T-cell (primary cell): ENCODE measurements at regions of chr19 and their contacts with region 1.

Region 1: GRCh38 chr19:16111160-16111908 is at the start of gene RAB8A:
- DNase-seq: peak; percentile 95 to 100 (median 98)
- ATAC-seq: peak; percentile 91 to 93 (median 91)
- H3K4me3 ChIP-seq: peak within 1 kb of the TSS; percentile 60 to 84
- H3K4me3 Mint-ChIP-seq: peak within 1 kb of the TSS; percentile 94 to 98 (median 97)
- H3K27ac ChIP-seq: peak within 1 kb of the TSS; percentile 82
- H3K27ac Mint-ChIP-seq: peak within 1 kb of the TSS; percentile 97 to 98
- H3K4me1 ChIP-seq: peaks cover 4 to 50% of the 10 kb centered on the region in 2 experiments
- H3K4me1 Mint-ChIP-seq: peaks cover 32 to 41% (median 40%) of the 10 kb centered on the region in 3 donors
- H3K27me3 ChIP-seq: no peaks in the 10 kb centered on the region
- H3K27me3 Mint-ChIP-seq: no peaks in the 10 kb centered on the region
- total RNA-seq, gene RAB8A: 67.0 to 84.5 (median 71.7) TPM

Region 2: GRCh38 chr19:16070366-16070990 is 40.9 kb before region 1 on chr19:
- CTCF ChIA-PET with region 1: interaction called, 3 to 10 read pairs
- POLR2A ChIA-PET with region 1: no interaction called
- DNase-seq: peak; percentile 70 to 93 (median 85)
- ATAC-seq: peak; percentile 90 to 93 (median 92)
- H3K4me3 ChIP-seq: peak overlapping the region; percentile 35 to 40
- H3K4me3 Mint-ChIP-seq: peak overlapping the region in 2 of 3 donors; percentile 54 to 69
- H3K27ac ChIP-seq: peak overlapping the region; percentile 96
- H3K27ac Mint-ChIP-seq: no peak overlapping the region
- H3K4me1 ChIP-seq: peaks cover 32 to 63% of the 10 kb centered on the region in 2 experiments
- H3K4me1 Mint-ChIP-seq: peaks cover 41 to 46% (median 44%) of the 10 kb centered on the region in 3 donors
- H3K27me3 ChIP-seq: no peaks in the 10 kb centered on the region
- H3K27me3 Mint-ChIP-seq: no peaks in the 10 kb centered on the region

Region 3: GRCh38 chr19:16078772-16079645 is 32.3 kb before region 1 on chr19:
- CTCF ChIA-PET with region 1: interaction called in 1 of 2 experiments, 3 read pairs
- POLR2A ChIA-PET with region 1: interaction called in 1 of 2 experiments, 14 read pairs
- DNase-seq: peak; percentile 27 to 91 (median 69)
- ATAC-seq: peak; percentile 77 to 81 (median 78)
- H3K4me3 ChIP-seq: peak overlapping the region; percentile 41 to 74
- H3K4me3 Mint-ChIP-seq: peak overlapping the region; percentile 75 to 95 (median 81)
- H3K27ac ChIP-seq: peak overlapping the region; percentile 78
- H3K27ac Mint-ChIP-seq: peak overlapping the region; percentile 95 to 99
- H3K4me1 ChIP-seq: peaks cover 29 to 78% of the 10 kb centered on the region in 2 experiments
- H3K4me1 Mint-ChIP-seq: peaks cover 67 to 81% (median 75%) of the 10 kb centered on the region in 3 donors
- H3K27me3 ChIP-seq: no peaks in the 10 kb centered on the region
- H3K27me3 Mint-ChIP-seq: no peaks in the 10 kb centered on the region